ENCODE measurements at regions of chr12 and their contacts with region 1.

Region 1: DNA sequence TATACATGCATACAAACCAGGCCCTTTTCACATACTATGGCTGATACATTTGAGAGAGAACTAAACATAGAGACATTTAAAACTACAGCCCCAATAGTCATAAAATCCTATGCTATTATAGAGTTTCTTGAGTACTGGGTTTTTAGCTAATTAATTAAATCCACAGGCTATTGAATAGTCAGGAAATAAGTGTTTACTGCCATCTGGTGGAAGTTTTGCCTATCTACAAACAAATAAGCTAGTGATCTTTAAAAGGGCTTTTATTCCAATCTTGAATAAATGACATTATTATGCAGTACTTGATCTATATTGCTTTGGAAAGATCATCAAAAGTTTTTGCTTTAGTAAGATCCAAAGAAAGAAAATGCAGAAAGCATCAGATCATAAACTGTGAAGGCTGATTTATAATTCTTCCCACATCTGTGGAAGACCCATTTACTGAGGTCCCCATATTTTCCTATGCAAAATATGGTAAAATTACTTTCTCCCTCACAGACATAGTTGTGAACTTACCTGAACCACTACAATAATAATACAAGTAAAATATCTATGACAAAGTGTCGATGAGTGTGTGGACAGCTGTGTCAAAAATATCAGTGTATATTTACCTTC is 131.3 kb downstream of the ITPR2 start:
- DNase-seq: peak; percentile 65
- H3K4me3 ChIP-seq: no peak overlapping the region
- H3K27ac ChIP-seq: no peak overlapping the region
- H3K4me1 ChIP-seq: peaks cover 56% of the 10 kb centered on the region
- H3K27me3 ChIP-seq: no peaks in the 10 kb centered on the region
- CTCF ChIP-seq: peak; percentile 20 to 22
- POLR2A ChIP-seq: no peak

Region 2: GRCh38 chr12:26126340-26127284 is 575.1 kb before region 1 on chr12:
- CTCF ChIA-PET with region 1: interaction called, 24 read pairs
- POLR2A ChIA-PET with region 1: no interaction called
- dilution Hi-C with region 1: no loop called
- intact Hi-C with region 1: no loop called
- DNase-seq: peak; percentile 64
- H3K4me3 ChIP-seq: peak overlapping the region; percentile 39 to 64 (median 49)
- H3K27ac ChIP-seq: no peak overlapping the region
- H3K4me1 ChIP-seq: peaks cover 23% of the 10 kb centered on the region
- H3K27me3 ChIP-seq: peaks cover 35 to 60% of the 10 kb centered on the region in 2 experiments
- CTCF ChIP-seq: no peak
- POLR2A ChIP-seq: no peak

Region 3: DNA sequence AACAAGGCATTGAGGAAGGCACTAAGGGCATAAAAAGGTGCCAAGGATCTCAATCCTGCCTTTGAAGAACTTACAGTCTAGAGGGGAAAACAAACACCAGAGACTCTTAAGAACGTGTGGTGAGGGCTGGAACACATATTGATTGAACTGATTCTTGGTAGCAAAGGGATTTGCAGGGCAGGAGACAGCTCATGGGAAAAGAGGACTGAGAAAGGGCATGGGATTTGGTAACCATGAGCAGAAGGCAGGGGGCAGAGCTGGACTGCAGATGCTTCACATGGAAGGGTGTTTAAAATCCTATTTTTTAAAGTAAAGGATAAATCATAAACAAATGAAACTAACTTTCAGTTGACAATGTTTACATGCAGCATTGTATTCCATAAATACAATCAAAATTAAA is 71.8 kb before region 1 on chr12:
- CTCF ChIA-PET with region 1: interaction called, 112 read pairs
- POLR2A ChIA-PET with region 1: interaction called, 3 read pairs
- dilution Hi-C with region 1: no loop called
- intact Hi-C with region 1: loop called (anchors 1 kb)
- DNase-seq: peak; percentile 61
- H3K4me3 ChIP-seq: peak overlapping the region in 1 of 3 experiments; percentile 31
- H3K27ac ChIP-seq: peak overlapping the region; percentile 78
- H3K4me1 ChIP-seq: peaks cover 32% of the 10 kb centered on the region
- H3K27me3 ChIP-seq: no peaks in the 10 kb centered on the region
- CTCF ChIP-seq: peak; percentile 27 to 32
- POLR2A ChIP-seq: no peak

Region 4: DNA sequence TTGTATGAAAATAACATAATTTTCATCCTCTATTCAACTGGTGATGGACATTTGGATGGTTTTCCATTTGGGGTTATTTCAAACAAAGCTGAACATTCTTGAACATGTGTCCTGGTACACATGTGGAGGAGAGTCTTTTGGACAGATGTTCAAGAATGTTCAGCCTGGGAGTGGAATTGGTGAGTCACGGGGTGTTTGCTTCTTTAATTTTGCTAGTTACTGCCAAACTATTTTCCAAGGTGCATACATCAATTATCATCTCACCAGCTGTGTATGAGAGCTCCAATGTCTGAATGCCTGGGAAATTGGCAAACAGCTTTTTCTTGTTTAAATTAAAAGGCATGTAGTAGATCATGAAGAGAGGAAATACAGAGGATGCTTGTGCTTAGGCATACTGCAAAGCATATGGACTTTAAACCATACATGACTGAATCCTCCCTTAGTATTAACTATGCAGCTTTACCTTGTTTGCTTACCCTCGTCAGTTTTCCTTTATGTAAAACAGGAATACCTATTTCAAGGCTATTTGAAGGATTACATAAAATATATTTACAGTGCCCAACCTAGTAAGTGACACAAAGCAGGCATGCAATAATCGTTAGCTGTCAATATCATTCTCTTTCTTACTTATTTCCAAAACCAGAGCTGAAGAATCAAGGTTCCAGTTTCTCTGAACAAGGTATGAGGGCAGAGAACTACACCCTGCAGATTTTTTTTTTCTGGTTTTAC is 20.8 kb before region 1 on chr12:
- CTCF ChIA-PET with region 1: interaction called, 16 read pairs
- POLR2A ChIA-PET with region 1: interaction called, 7 read pairs
- dilution Hi-C with region 1: no loop called
- intact Hi-C with region 1: loop called (anchors 2 kb)
- DNase-seq: peak; percentile 57
- H3K4me3 ChIP-seq: no peak overlapping the region
- H3K27ac ChIP-seq: peak overlapping the region; percentile 48
- H3K4me1 ChIP-seq: peaks cover 52% of the 10 kb centered on the region
- H3K27me3 ChIP-seq: no peaks in the 10 kb centered on the region
- CTCF ChIP-seq: no peak
- POLR2A ChIP-seq: no peak

Region 5: DNA sequence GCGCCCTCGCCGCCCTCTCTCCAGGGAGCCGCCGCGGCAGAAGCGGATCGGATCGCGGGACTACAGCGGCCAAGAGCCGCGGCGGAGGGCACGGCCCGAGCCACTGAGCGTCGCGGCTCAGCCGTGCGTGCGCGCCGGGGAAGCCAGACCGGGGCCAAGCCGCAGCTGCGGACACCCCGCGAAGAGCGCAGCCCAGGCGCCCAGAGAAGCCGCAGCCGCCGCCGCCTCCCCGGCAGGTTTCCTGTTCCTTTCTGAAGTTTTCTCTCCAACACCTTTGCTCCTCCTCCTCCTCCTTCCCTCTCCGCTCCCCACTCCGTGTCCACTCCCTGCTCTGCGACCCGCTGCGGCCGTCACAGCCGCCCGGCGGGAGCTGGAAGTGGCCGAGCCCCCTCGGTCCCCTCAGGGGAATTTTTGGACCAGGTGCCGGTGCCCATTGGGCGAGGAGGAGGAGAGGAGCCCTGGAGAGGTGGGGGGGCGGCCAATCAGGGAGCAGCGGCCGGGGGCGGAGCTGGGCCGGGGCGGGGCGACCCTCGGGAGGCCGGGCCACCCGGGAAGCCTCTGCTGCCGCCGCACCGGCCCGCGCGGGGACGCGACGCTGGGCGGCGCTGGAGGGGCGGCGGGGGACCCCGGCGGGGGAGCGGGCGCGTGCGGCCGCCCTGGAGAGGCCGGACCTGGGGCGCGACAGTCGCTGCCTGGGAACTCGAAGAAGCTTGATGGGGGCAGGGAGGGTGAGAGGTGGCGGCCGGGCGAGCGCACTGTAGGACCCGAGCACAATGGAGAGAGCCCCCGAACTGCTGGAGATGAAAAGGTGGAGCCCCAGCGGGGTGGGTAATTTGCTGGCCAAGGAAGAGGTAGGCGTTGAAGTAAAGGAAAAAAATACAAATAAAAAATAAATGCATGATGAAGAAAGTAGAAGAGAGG is 131.4 kb after region 1 on chr12 and contains the start of gene ITPR2:
- CTCF ChIA-PET with region 1: interaction called, 31 read pairs
- POLR2A ChIA-PET with region 1: interaction called, 4 read pairs
- dilution Hi-C with region 1: no loop called
- intact Hi-C with region 1: loop called (anchors 1 kb)
- DNase-seq: peak; percentile 89
- H3K4me3 ChIP-seq: peak within 1 kb of the TSS; percentile 72 to 91 (median 78)
- H3K27ac ChIP-seq: peak within 1 kb of the TSS; percentile 96
- H3K4me1 ChIP-seq: peaks cover 23% of the 10 kb centered on the region
- H3K27me3 ChIP-seq: no peaks in the 10 kb centered on the region
- CTCF ChIP-seq: peak in 1 of 2 donors; percentile 12
- POLR2A ChIP-seq: peak; percentile 91
- total RNA-seq, gene ITPR2: 86.8 and 88.5 TPM in 2 replicates

Region 6: GRCh38 chr12:26884765-26885576 is 183.3 kb after region 1 on chr12:
- CTCF ChIA-PET with region 1: interaction called, 21 read pairs
- POLR2A ChIA-PET with region 1: no interaction called
- dilution Hi-C with region 1: no loop called
- intact Hi-C with region 1: loop called (anchors 5 kb)
- DNase-seq: peak; percentile 83
- H3K4me3 ChIP-seq: no peak overlapping the region
- H3K27ac ChIP-seq: no peak overlapping the region
- H3K4me1 ChIP-seq: peaks cover 2% of the 10 kb centered on the region
- H3K27me3 ChIP-seq: no peaks in the 10 kb centered on the region
- CTCF ChIP-seq: peak; percentile 88 to 90
- POLR2A ChIP-seq: no peak

Region 7: GRCh38 chr12:26929590-26929989 is 227.9 kb after region 1 on chr12:
- CTCF ChIA-PET with region 1: no interaction called
- POLR2A ChIA-PET with region 1: no interaction called
- dilution Hi-C with region 1: no loop called
- intact Hi-C with region 1: no loop called
- DNase-seq: no peak
- H3K4me3 ChIP-seq: no peak overlapping the region
- H3K27ac ChIP-seq: no peak overlapping the region
- H3K4me1 ChIP-seq: no peaks in the 10 kb centered on the region
- H3K27me3 ChIP-seq: no peaks in the 10 kb centered on the region
- CTCF ChIP-seq: no peak
- POLR2A ChIP-seq: no peak